Ovary (tissue), 10 donors: ENCODE measurements at regions of chr17 and their contacts with region 1.

Region 1: DNA sequence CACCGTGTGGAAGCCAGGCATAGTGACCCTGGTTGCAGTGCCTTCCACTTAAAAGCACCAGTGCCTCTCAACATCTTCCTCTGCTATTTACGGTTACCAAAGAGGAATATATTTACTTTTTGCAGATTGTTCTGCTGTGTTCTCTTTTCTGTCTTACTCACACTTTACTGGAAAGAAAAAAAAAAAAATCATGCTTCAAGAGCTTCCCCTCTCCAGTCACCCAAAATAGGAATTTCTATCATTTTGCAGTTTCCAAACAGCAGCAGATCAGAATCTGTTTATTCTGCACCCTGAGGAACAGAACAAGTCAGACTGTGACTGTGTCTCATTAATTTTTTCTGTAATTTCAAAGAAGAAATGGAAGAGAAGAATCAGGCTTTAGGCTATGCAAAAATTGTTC is 96.1 kb downstream of the KCNJ2 start:
- DNase-seq: no peak
- H3K4me3 ChIP-seq: no peak overlapping the region
- H3K27ac ChIP-seq: no peak overlapping the region
- H3K4me1 ChIP-seq: no peaks in the 10 kb centered on the region
- H3K27me3 ChIP-seq: no peaks in the 10 kb centered on the region
- CTCF ChIP-seq: no peak
- EP300 ChIP-seq: no peak
- POLR2A ChIP-seq: no peak

Region 2: GRCh38 chr17:71458322-71458721 is 1192.9 kb after region 1 on chr17:
- intact Hi-C with region 1: loop called in 1 of 4 experiments (anchors 5 kb)
- DNase-seq: no peak
- H3K4me3 ChIP-seq: no peak overlapping the region
- H3K27ac ChIP-seq: no peak overlapping the region
- H3K4me1 ChIP-seq: no peaks in the 10 kb centered on the region
- H3K27me3 ChIP-seq: no peaks in the 10 kb centered on the region
- CTCF ChIP-seq: no peak
- EP300 ChIP-seq: no peak
- POLR2A ChIP-seq: no peak